Spleen (tissue), 13 donors: ENCODE measurements at regions of chr20 and their contacts with region 1.

Region 1: DNA sequence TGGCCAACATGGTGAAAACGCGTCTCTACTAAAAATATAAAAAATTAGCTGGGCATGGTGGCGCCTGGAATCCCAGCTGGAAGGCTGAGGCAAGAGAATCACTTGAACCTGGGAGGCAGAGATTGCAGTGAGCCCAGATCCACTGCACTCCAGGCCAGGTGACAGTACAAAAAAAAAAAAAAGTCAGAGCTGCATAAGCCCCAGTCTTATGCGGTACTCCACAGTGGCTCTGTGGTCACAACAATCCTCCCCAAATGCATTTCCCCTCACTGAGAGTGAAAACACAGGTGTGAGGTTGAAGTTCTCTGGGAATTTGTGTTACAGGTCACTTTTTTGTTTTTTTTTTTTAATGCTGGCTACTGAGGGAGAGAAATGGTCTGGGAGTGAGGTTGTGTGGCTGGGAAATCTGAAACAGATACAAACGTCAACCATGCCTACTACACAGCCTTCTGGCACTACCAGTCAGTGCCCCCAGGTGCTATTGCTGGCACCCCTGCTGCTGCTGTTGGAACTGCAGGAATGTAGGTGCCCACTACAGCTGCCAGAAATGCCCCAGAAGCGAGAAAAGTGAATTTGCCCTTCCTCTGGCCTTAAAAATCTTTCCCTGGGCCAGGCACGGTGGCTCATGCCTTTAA is 5.7 kb downstream of the MRPS26 start:
- DNase-seq: no peak
- H3K4me3 ChIP-seq: no peak overlapping the region
- H3K27ac ChIP-seq: no peak overlapping the region
- H3K4me1 ChIP-seq: peaks cover 7 to 18% (median 14%) of the 10 kb centered on the region in 6 donors
- H3K27me3 ChIP-seq: no peaks in the 10 kb centered on the region
- CTCF ChIP-seq: no peak
- POLR2A ChIP-seq: no peak

Region 2: DNA sequence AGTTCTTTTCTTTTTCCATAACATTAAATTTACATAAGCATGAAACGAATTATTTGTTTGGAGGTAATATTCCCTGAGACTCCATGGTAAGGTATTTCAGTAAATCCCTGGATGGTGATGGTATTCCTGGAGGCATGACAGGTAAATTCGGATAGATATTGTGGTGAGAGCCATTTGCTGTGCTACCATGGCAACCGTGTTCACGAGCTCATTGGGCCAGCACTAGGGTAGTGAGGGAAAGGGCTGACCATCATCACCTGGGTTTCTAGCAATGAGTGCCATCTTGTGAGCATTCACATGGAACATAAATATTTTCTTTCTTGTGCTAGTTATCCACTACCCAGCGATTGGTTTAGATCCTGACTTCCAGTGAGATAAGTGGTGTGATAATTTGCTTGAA is 60.0 kb before region 1 on chr20:
- intact Hi-C with region 1: no loop called
- DNase-seq: no peak
- H3K4me3 ChIP-seq: no peak overlapping the region
- H3K27ac ChIP-seq: no peak overlapping the region
- H3K4me1 ChIP-seq: peaks cover 0 to 9% (median 0%) of the 10 kb centered on the region in 6 donors
- H3K27me3 ChIP-seq: no peaks in the 10 kb centered on the region
- CTCF ChIP-seq: no peak
- POLR2A ChIP-seq: no peak

Region 3: GRCh38 chr20:3109350-3110302 is 58.1 kb after region 1 on chr20:
- intact Hi-C with region 1: loop called (anchors 5 kb)
- DNase-seq: no peak
- H3K4me3 ChIP-seq: no peak overlapping the region
- H3K27ac ChIP-seq: peak overlapping the region in 1 of 8 donors; percentile 26
- H3K4me1 ChIP-seq: peaks cover 0 to 56% (median 0%) of the 10 kb centered on the region in 6 donors
- H3K27me3 ChIP-seq: no peaks in the 10 kb centered on the region
- CTCF ChIP-seq: no peak
- POLR2A ChIP-seq: no peak